ENCODE measurements at regions of chr20 and their contacts with region 1.

Region 1: GRCh38 chr20:32357869-32358631 is at the start of gene ASXL1:
- DNase-seq: peak; percentile 81 to 96 (median 95)
- ATAC-seq: peak; percentile 94
- H3K4me3 ChIP-seq: peak within 1 kb of the TSS; percentile 95
- H3K4me3 Mint-ChIP-seq: peak within 1 kb of the TSS; percentile 87 to 99 (median 96)
- H3K27ac ChIP-seq: peak within 1 kb of the TSS; percentile 98
- H3K27ac Mint-ChIP-seq: peak within 1 kb of the TSS; percentile 97 to 100 (median 99)
- H3K4me1 ChIP-seq: peaks cover 10 to 27% of the 10 kb centered on the region in 2 donors
- H3K4me1 Mint-ChIP-seq: peaks cover 38 to 65% (median 45%) of the 10 kb centered on the region in 7 donors
- H3K27me3 ChIP-seq: no peaks in the 10 kb centered on the region
- H3K27me3 Mint-ChIP-seq: no peaks in the 10 kb centered on the region
- total RNA-seq, gene ASXL1: 106 to 200 (median 158) TPM

Region 2: GRCh38 chr20:32109392-32110172 is 248.5 kb before region 1 on chr20 and contains the start of gene TM9SF4:
- CTCF ChIA-PET with region 1: no interaction called
- POLR2A ChIA-PET with region 1: no interaction called
- intact Hi-C with region 1: loop called (anchors 1 kb)
- DNase-seq: peak; percentile 87 to 96 (median 93)
- ATAC-seq: peak; percentile 92
- H3K4me3 ChIP-seq: peak within 1 kb of the TSS; percentile 92
- H3K4me3 Mint-ChIP-seq: peak within 1 kb of the TSS; percentile 78 to 100 (median 96)
- H3K27ac ChIP-seq: peak within 1 kb of the TSS; percentile 94
- H3K27ac Mint-ChIP-seq: peak within 1 kb of the TSS; percentile 95 to 100 (median 100)
- H3K4me1 ChIP-seq: peaks cover 11% of the 10 kb centered on the region in 2 donors
- H3K4me1 Mint-ChIP-seq: peaks cover 26 to 44% (median 39%) of the 10 kb centered on the region in 7 donors
- H3K27me3 ChIP-seq: no peaks in the 10 kb centered on the region
- H3K27me3 Mint-ChIP-seq: no peaks in the 10 kb centered on the region
- total RNA-seq, gene TM9SF4: 35.2 to 61.0 (median 41.5) TPM

Region 3: GRCh38 chr20:32336918-32337347 is 21.1 kb before region 1 on chr20:
- CTCF ChIA-PET with region 1: no interaction called
- POLR2A ChIA-PET with region 1: interaction called, 5 read pairs
- intact Hi-C with region 1: loop called (anchors 1 to 2 kb)
- DNase-seq: peak in 7 of 9 donors; percentile 18 to 57 (median 35)
- ATAC-seq: peak; percentile 79
- H3K4me3 ChIP-seq: no peak overlapping the region
- H3K4me3 Mint-ChIP-seq: no peak overlapping the region
- H3K27ac ChIP-seq: no peak overlapping the region
- H3K27ac Mint-ChIP-seq: peak overlapping the region in 3 of 9 donors; percentile 5 to 75 (median 18)
- H3K4me1 ChIP-seq: peaks cover 5 to 13% of the 10 kb centered on the region in 2 donors
- H3K4me1 Mint-ChIP-seq: peaks cover 5 to 27% (median 8%) of the 10 kb centered on the region in 7 donors
- H3K27me3 ChIP-seq: no peaks in the 10 kb centered on the region
- H3K27me3 Mint-ChIP-seq: no peaks in the 10 kb centered on the region

Region 4: DNA sequence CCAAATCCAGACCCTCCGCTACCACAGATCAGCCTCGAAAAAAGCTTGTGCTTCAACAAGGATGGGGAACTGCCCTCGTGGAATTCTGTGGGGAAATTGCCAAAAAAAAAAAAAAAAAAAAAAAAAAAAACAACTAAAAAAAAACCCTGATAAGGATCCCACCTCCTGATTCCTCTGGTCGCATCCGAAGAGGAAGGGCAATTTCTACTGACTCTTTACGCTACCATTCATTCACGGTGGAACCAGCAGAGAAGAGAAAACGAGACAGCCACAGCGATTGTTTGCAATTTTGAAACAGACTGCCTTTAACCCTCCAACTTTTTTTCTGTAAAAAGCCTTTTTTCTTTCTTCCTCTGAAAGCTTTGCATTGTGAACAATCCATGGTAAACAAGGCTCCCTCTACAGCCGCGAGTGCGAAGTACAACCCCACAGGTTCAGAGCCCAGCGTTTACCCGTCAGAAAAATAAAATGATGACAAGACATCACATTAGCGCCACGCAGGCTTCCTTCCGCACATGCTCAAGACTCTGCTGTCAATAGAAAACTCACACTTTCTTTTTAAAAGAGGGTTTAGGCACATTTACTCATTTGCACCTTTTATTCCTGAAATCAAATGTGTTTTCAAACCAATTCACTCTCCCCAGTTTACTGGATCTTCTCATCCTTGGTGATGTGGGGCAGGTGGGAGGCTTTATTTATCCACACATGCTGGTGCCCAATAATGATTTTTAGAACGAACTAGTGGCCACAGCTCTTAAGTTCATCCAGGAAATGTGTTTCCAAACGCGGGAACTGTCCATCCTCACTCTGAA is 127.1 kb after region 1 on chr20:
- CTCF ChIA-PET with region 1: no interaction called
- POLR2A ChIA-PET with region 1: interaction called, 5 read pairs
- intact Hi-C with region 1: loop called (anchors 1 kb)
- DNase-seq: peak; percentile 60 to 94 (median 91)
- ATAC-seq: peak; percentile 92
- H3K4me3 ChIP-seq: peak overlapping the region; percentile 55
- H3K4me3 Mint-ChIP-seq: peak overlapping the region; percentile 82 to 95 (median 92)
- H3K27ac ChIP-seq: peak overlapping the region; percentile 67
- H3K27ac Mint-ChIP-seq: peak overlapping the region; percentile 80 to 98 (median 88)
- H3K4me1 ChIP-seq: peaks cover 8 to 34% of the 10 kb centered on the region in 2 donors
- H3K4me1 Mint-ChIP-seq: peaks cover 20 to 58% (median 51%) of the 10 kb centered on the region in 7 donors
- H3K27me3 ChIP-seq: no peaks in the 10 kb centered on the region
- H3K27me3 Mint-ChIP-seq: peaks cover 0 to 5% (median 0%) of the 10 kb centered on the region in 5 donors

Region 5: DNA sequence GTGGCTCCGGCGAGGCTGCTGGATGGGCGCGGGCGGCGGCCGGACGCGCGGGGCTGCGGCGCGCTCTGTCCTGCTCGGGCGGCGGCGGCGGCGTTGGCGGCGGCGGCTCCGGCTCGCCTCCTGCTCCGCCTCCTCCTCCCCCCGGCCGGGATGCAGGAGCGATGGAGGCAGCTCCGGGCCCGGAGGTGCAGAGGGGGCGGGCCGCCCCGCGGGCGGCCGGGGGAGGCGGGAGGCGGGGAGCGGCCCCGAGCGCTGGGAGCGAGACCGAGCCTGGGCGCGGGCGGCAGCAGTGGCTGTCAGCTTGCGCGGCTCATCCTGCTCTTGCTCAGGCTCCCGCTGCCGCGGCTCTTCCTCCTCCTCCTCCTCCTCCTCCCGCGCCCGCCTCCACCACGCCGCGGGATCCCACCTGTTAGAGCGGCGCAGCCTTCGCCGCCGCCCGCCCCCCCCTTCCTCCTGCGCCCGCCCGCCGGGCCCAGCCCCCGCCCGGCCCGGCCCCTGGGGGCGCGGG is 227.0 kb after region 1 on chr20 and contains the start of gene NOL4L:
- CTCF ChIA-PET with region 1: no interaction called
- POLR2A ChIA-PET with region 1: no interaction called
- intact Hi-C with region 1: loop called (anchors 1 to 5 kb)
- DNase-seq: peak in 4 of 9 donors; percentile 34 to 59 (median 45)
- ATAC-seq: peak; percentile 30
- H3K4me3 ChIP-seq: peak within 1 kb of the TSS; percentile 78
- H3K4me3 Mint-ChIP-seq: peak within 1 kb of the TSS; percentile 89 to 97 (median 93)
- H3K27ac ChIP-seq: peak within 1 kb of the TSS; percentile 70
- H3K27ac Mint-ChIP-seq: peak within 1 kb of the TSS; percentile 78 to 97 (median 91)
- H3K4me1 ChIP-seq: peaks cover 9 to 37% of the 10 kb centered on the region in 2 donors
- H3K4me1 Mint-ChIP-seq: peaks cover 21 to 48% (median 38%) of the 10 kb centered on the region in 7 donors
- H3K27me3 ChIP-seq: no peaks in the 10 kb centered on the region
- H3K27me3 Mint-ChIP-seq: peaks cover 0 to 28% (median 0%) of the 10 kb centered on the region in 5 donors
- total RNA-seq, gene NOL4L: 29.4 to 81.9 (median 74.6) TPM

Region 6: GRCh38 chr20:33062105-33062824 is 704.2 kb after region 1 on chr20:
- CTCF ChIA-PET with region 1: no interaction called
- POLR2A ChIA-PET with region 1: no interaction called
- intact Hi-C with region 1: no loop called
- DNase-seq: no peak
- ATAC-seq: no peak
- H3K4me3 ChIP-seq: no peak overlapping the region
- H3K4me3 Mint-ChIP-seq: peak overlapping the region in 1 of 10 donors; percentile 34
- H3K27ac ChIP-seq: no peak overlapping the region
- H3K27ac Mint-ChIP-seq: peak overlapping the region in 1 of 9 donors; percentile 25
- H3K4me1 ChIP-seq: no peaks in the 10 kb centered on the region
- H3K4me1 Mint-ChIP-seq: peaks cover 0 to 12% (median 8%) of the 10 kb centered on the region in 7 donors
- H3K27me3 ChIP-seq: no peaks in the 10 kb centered on the region
- H3K27me3 Mint-ChIP-seq: no peaks in the 10 kb centered on the region

Region 7: DNA sequence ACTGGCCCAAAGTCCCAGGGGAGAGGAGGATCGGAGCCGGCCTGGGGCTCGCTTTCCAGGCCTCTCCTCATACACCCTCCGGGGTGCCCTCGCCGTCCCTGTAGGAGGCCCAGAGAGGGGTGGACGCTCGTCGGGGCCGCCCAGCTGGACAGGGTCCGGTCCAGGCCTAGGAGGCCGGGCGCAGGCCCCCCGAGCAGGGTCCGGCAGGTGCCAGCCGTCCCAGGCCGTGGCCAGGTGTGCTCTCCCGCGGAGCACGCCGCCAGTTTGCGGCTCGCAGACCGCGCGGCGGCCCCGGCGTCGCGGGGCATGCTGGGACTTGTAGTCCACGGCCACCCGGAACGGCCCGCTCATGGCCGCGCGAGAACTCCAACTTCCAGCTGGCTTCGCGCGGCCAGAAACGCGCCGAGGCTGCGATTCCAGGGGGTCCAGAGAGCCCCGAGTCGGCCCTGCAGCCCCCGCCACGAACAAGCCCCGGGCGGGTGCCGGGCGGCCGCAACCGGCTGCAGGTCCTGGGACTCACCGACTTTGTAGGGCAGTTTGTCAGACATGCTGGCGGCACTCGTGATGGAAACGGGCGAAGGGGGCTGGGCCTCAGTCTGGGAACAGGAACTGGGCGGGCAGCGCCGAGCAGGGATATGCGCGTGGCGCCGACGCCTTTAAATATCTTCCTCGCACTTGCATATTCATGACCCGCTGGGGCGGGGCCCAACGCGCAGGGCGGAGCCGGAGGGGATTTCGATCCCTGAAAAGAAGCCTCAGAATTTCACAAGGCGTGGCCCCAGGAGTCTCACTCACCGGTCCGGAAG is 1944.9 kb after region 1 on chr20 and contains the start of gene AHCY:
- CTCF ChIA-PET with region 1: no interaction called
- POLR2A ChIA-PET with region 1: no interaction called
- intact Hi-C with region 1: loop called in 1 of 2 experiments (anchors 5 kb)
- DNase-seq: peak; percentile 84 to 95 (median 92)
- ATAC-seq: peak; percentile 96
- H3K4me3 ChIP-seq: peak within 1 kb of the TSS; percentile 91
- H3K4me3 Mint-ChIP-seq: peak within 1 kb of the TSS; percentile 90 to 96 (median 91)
- H3K27ac ChIP-seq: peak within 1 kb of the TSS; percentile 87
- H3K27ac Mint-ChIP-seq: peak within 1 kb of the TSS; percentile 89 to 95 (median 93)
- H3K4me1 ChIP-seq: peaks cover 3 to 6% of the 10 kb centered on the region in 2 donors
- H3K4me1 Mint-ChIP-seq: peaks cover 0 to 27% (median 14%) of the 10 kb centered on the region in 7 donors
- H3K27me3 ChIP-seq: no peaks in the 10 kb centered on the region
- H3K27me3 Mint-ChIP-seq: peaks cover 0 to 2% (median 0%) of the 10 kb centered on the region in 5 donors
- total RNA-seq, gene AHCY: 19.1 to 62.9 (median 23.7) TPM

Measured in naive thymus-derived CD4-positive, alpha-beta T cell (primary cell).